CD4-positive, alpha-beta memory T cell (primary cell): ENCODE measurements at regions of chr16 and their contacts with region 1.

Region 1: DNA sequence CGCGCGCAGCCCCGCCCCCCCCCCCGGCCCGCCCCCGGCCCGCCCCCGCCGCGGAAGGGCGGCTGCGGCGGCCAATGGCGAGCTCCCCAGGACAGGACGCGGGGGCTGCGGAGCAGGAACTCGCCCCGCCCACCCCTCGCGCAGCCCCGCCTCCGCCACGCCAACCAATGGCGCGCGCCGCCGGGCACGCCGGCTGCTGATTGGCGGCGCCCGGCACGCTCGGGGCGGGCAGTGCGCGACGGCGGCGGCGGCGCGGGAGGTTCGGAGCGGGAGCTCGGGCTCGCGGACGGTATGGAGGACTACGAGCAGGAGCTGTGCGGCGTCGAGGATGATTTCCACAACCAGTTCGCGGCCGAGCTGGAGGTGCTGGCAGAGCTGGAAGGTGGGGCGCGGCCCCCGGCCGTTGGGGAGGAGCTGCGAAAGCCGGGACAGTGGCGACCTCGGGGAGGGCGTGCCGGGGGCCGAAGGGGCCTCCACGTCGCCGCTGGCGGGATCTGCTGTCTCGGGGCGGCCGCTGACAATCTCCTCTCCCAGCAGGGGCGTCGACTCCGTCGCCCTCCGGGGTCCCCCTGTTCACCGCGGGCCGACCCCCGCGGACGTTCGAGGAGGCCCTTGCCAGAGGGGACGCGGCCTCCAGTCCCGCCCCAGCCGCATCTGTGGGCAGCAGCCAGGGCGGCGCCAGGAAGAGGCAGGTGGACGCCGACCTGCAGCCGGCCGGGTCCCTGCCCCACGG is at the start of gene CHTF18:
- DNase-seq: peak; percentile 90 to 96 (median 95)
- H3K4me3 ChIP-seq: peak within 1 kb of the TSS; percentile 17 to 83
- H3K4me3 Mint-ChIP-seq: peak within 1 kb of the TSS; percentile 82 to 91 (median 85)
- H3K27ac ChIP-seq: peak within 1 kb of the TSS; percentile 73
- H3K27ac Mint-ChIP-seq: peak within 1 kb of the TSS in 6 of 7 donors; percentile 41 to 80 (median 67)
- H3K4me1 ChIP-seq: peaks cover 21% of the 10 kb centered on the region
- H3K4me1 Mint-ChIP-seq: peaks cover 2 to 30% (median 8%) of the 10 kb centered on the region in 4 donors
- H3K27me3 ChIP-seq: no peaks in the 10 kb centered on the region
- H3K27me3 Mint-ChIP-seq: no peaks in the 10 kb centered on the region
- total RNA-seq, gene CHTF18: 42.1 to 46.9 TPM

Region 2: GRCh38 chr16:648781-649589 is 139.6 kb before region 1 on chr16 and contains the start of gene WDR90:
- CTCF ChIA-PET with region 1: no interaction called
- POLR2A ChIA-PET with region 1: no interaction called
- intact Hi-C with region 1: loop called (anchors 5 kb)
- DNase-seq: peak; percentile 88 to 93 (median 90)
- H3K4me3 ChIP-seq: peak within 1 kb of the TSS; percentile 3 to 53
- H3K4me3 Mint-ChIP-seq: peak within 1 kb of the TSS; percentile 60 to 82 (median 76)
- H3K27ac ChIP-seq: peak within 1 kb of the TSS; percentile 79
- H3K27ac Mint-ChIP-seq: peak within 1 kb of the TSS; percentile 68 to 92 (median 87)
- H3K4me1 ChIP-seq: peaks cover 14% of the 10 kb centered on the region
- H3K4me1 Mint-ChIP-seq: peaks cover 0 to 30% (median 8%) of the 10 kb centered on the region in 4 donors
- H3K27me3 ChIP-seq: no peaks in the 10 kb centered on the region
- H3K27me3 Mint-ChIP-seq: no peaks in the 10 kb centered on the region
- total RNA-seq, gene WDR90: 18.0 to 19.7 TPM

Region 3: DNA sequence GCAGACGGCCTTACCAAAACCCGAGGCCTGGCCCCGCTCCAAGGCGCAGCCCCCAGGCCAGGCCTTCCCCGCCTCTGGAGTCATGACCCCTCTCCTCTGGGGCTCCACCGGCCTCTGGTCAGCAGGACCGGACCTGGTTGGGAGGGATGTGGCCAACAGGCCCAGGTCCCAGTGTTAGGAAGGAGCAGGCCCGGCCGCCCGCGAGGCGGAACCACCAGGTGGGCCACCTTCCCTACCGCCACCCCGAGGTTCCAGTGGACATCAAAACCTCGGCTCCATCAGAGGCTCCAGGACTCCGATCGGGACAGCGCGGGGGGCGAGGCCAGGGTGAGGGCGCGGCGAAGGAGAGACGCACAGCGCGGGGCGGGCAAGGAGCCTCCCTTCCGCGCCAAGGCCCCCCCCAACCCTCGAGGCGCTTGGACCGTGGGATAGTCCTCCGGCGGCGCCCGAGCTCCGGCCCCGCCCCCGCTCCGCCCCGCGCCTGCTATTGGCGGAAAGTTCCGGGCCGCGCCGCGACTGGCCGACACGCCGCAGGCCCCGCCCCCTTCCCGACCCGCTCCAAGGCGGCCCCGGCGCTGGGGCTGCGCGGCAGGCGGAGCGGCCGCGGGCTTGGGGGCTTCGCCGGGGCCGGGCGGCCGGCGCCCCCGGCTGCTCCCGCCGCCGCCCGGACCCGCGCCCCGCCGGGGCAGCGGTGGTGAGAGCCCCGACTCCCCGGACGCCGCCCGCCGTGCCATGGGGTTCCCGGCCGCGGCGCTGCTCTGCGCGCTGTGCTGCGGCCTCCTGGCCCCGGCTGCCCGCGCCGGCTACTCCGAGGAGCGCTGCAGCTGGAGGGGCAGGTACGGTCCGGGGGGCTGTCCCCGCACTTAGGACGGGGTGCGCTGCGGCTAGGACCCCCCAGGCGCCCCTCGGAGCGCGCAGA is 73.7 kb before region 1 on chr16 and contains the start of gene METRN:
- CTCF ChIA-PET with region 1: interaction called, 84 read pairs
- POLR2A ChIA-PET with region 1: interaction called, 15 read pairs
- intact Hi-C with region 1: loop called (anchors 1 kb)
- DNase-seq: peak; percentile 81 to 85 (median 84)
- H3K4me3 ChIP-seq: peak within 1 kb of the TSS in 1 of 2 donors; percentile 43
- H3K4me3 Mint-ChIP-seq: peak within 1 kb of the TSS; percentile 39 to 73 (median 56)
- H3K27ac ChIP-seq: no peak within 1 kb of the TSS
- H3K27ac Mint-ChIP-seq: peak within 1 kb of the TSS in 2 of 7 donors; percentile 35 to 44
- H3K4me1 ChIP-seq: peaks cover 21% of the 10 kb centered on the region
- H3K4me1 Mint-ChIP-seq: peaks cover 0 to 22% (median 9%) of the 10 kb centered on the region in 4 donors
- H3K27me3 ChIP-seq: peaks cover 10% of the 10 kb centered on the region
- H3K27me3 Mint-ChIP-seq: peaks cover 0 to 8% of the 10 kb centered on the region in 2 donors
- total RNA-seq, gene METRN: 6.9 to 7.7 TPM

Region 4: GRCh38 chr16:720990-721764 is 67.4 kb before region 1 on chr16 and contains the start of gene ANTKMT:
- CTCF ChIA-PET with region 1: interaction called, 7 read pairs
- POLR2A ChIA-PET with region 1: interaction called, 15 read pairs
- intact Hi-C with region 1: no loop called
- DNase-seq: peak; percentile 71 to 79 (median 77)
- H3K4me3 ChIP-seq: peak within 1 kb of the TSS; percentile 42 to 60
- H3K4me3 Mint-ChIP-seq: peak within 1 kb of the TSS; percentile 80 to 88 (median 84)
- H3K27ac ChIP-seq: peak within 1 kb of the TSS; percentile 47
- H3K27ac Mint-ChIP-seq: peak within 1 kb of the TSS; percentile 47 to 91 (median 84)
- H3K4me1 ChIP-seq: peaks cover 30% of the 10 kb centered on the region
- H3K4me1 Mint-ChIP-seq: peaks cover 3 to 33% (median 12%) of the 10 kb centered on the region in 4 donors
- H3K27me3 ChIP-seq: no peaks in the 10 kb centered on the region
- H3K27me3 Mint-ChIP-seq: no peaks in the 10 kb centered on the region
- total RNA-seq, gene ANTKMT: 21.5 to 23.5 TPM

Region 5: GRCh38 chr16:740764-741505 is 47.6 kb before region 1 on chr16 and contains the start of gene CIAO3:
- CTCF ChIA-PET with region 1: interaction called, 3 read pairs
- POLR2A ChIA-PET with region 1: interaction called, 4 read pairs
- intact Hi-C with region 1: loop called (anchors 2 kb)
- DNase-seq: peak; percentile 90 to 95 (median 91)
- H3K4me3 ChIP-seq: peak within 1 kb of the TSS; percentile 28 to 73
- H3K4me3 Mint-ChIP-seq: peak within 1 kb of the TSS; percentile 72 to 88 (median 78)
- H3K27ac ChIP-seq: peak within 1 kb of the TSS; percentile 85
- H3K27ac Mint-ChIP-seq: peak within 1 kb of the TSS in 6 of 7 donors; percentile 56 to 80 (median 62)
- H3K4me1 ChIP-seq: peaks cover 10% of the 10 kb centered on the region
- H3K4me1 Mint-ChIP-seq: peaks cover 0 to 11% (median 1%) of the 10 kb centered on the region in 4 donors
- H3K27me3 ChIP-seq: no peaks in the 10 kb centered on the region
- H3K27me3 Mint-ChIP-seq: no peaks in the 10 kb centered on the region
- total RNA-seq, gene CIAO3: 58.2 TPM

Region 6: GRCh38 chr16:807347-808084 is 19.0 kb after region 1 on chr16:
- CTCF ChIA-PET with region 1: interaction called, 4 read pairs
- POLR2A ChIA-PET with region 1: interaction called, 14 read pairs
- intact Hi-C with region 1: loop called (anchors 1 kb)
- DNase-seq: peak; percentile 72 to 79 (median 76)
- H3K4me3 ChIP-seq: peak overlapping the region; percentile 78 to 91
- H3K4me3 Mint-ChIP-seq: peak overlapping the region; percentile 93 to 96 (median 95)
- H3K27ac ChIP-seq: peak overlapping the region; percentile 80
- H3K27ac Mint-ChIP-seq: peak overlapping the region; percentile 89 to 99 (median 96)
- H3K4me1 ChIP-seq: peaks cover 10% of the 10 kb centered on the region
- H3K4me1 Mint-ChIP-seq: peaks cover 5 to 18% (median 7%) of the 10 kb centered on the region in 4 donors
- H3K27me3 ChIP-seq: no peaks in the 10 kb centered on the region
- H3K27me3 Mint-ChIP-seq: peaks cover 6 to 10% of the 10 kb centered on the region in 2 donors

Region 7: GRCh38 chr16:825341-826061 is 36.9 kb after region 1 on chr16:
- CTCF ChIA-PET with region 1: no interaction called
- POLR2A ChIA-PET with region 1: no interaction called
- intact Hi-C with region 1: no loop called
- DNase-seq: no peak
- H3K4me3 ChIP-seq: no peak overlapping the region
- H3K4me3 Mint-ChIP-seq: no peak overlapping the region
- H3K27ac ChIP-seq: no peak overlapping the region
- H3K27ac Mint-ChIP-seq: no peak overlapping the region
- H3K4me1 ChIP-seq: no peaks in the 10 kb centered on the region
- H3K4me1 Mint-ChIP-seq: peaks cover 0 to 6% (median 0%) of the 10 kb centered on the region in 4 donors
- H3K27me3 ChIP-seq: no peaks in the 10 kb centered on the region
- H3K27me3 Mint-ChIP-seq: peaks cover 8 to 11% of the 10 kb centered on the region in 2 donors

Region 8: GRCh38 chr16:970766-971581 is 182.4 kb after region 1 on chr16 and contains the start of gene LMF1:
- CTCF ChIA-PET with region 1: no interaction called
- POLR2A ChIA-PET with region 1: no interaction called
- intact Hi-C with region 1: loop called (anchors 2 kb)
- DNase-seq: peak; percentile 92 to 100 (median 93)
- H3K4me3 ChIP-seq: peak within 1 kb of the TSS; percentile 23 to 82
- H3K4me3 Mint-ChIP-seq: peak within 1 kb of the TSS; percentile 67 to 90 (median 76)
- H3K27ac ChIP-seq: peak within 1 kb of the TSS; percentile 81
- H3K27ac Mint-ChIP-seq: peak within 1 kb of the TSS; percentile 28 to 89 (median 71)
- H3K4me1 ChIP-seq: peaks cover 16% of the 10 kb centered on the region
- H3K4me1 Mint-ChIP-seq: peaks cover 12 to 30% (median 21%) of the 10 kb centered on the region in 4 donors
- H3K27me3 ChIP-seq: no peaks in the 10 kb centered on the region
- H3K27me3 Mint-ChIP-seq: no peaks in the 10 kb centered on the region
- total RNA-seq, gene LMF1: 50.0 to 59.7 TPM